ENCODE measurements at regions of chrX and their contacts with region 1.

Region 1: GRCh38 chrX:53422086-53422860 is at the start of gene SMC1A:
- DNase-seq: peak; percentile 97
- H3K4me3 Mint-ChIP-seq: peak within 1 kb of the TSS; percentile 90
- H3K27ac Mint-ChIP-seq: peak within 1 kb of the TSS; percentile 97
- H3K4me1 Mint-ChIP-seq: peaks cover 24% of the 10 kb centered on the region
- H3K27me3 Mint-ChIP-seq: no peaks in the 10 kb centered on the region
- total RNA-seq, gene SMC1A: 148 to 161 TPM

Region 2: GRCh38 chrX:53383376-53384076 is 38.7 kb before region 1 on chrX:
- CTCF ChIA-PET with region 1: no interaction called
- POLR2A ChIA-PET with region 1: no interaction called
- intact Hi-C with region 1: no loop called
- DNase-seq: no peak
- H3K4me3 Mint-ChIP-seq: no peak overlapping the region
- H3K27ac Mint-ChIP-seq: no peak overlapping the region
- H3K4me1 Mint-ChIP-seq: no peaks in the 10 kb centered on the region
- H3K27me3 Mint-ChIP-seq: no peaks in the 10 kb centered on the region

Region 3: GRCh38 chrX:53445977-53446376 is 23.7 kb after region 1 on chrX:
- CTCF ChIA-PET with region 1: interaction called, 10 read pairs
- POLR2A ChIA-PET with region 1: interaction called, 4 read pairs
- intact Hi-C with region 1: no loop called
- DNase-seq: peak; percentile 68
- H3K4me3 Mint-ChIP-seq: no peak overlapping the region
- H3K27ac Mint-ChIP-seq: no peak overlapping the region
- H3K4me1 Mint-ChIP-seq: no peaks in the 10 kb centered on the region
- H3K27me3 Mint-ChIP-seq: no peaks in the 10 kb centered on the region

Measured in activated CD4-positive, alpha-beta memory T cell treated with anti-CD3 and anti-CD28 coated beads for 36 hours (primary cell).